A549 (cell line): ENCODE measurements at regions of chr9 and their contacts with region 1.

Region 1: DNA sequence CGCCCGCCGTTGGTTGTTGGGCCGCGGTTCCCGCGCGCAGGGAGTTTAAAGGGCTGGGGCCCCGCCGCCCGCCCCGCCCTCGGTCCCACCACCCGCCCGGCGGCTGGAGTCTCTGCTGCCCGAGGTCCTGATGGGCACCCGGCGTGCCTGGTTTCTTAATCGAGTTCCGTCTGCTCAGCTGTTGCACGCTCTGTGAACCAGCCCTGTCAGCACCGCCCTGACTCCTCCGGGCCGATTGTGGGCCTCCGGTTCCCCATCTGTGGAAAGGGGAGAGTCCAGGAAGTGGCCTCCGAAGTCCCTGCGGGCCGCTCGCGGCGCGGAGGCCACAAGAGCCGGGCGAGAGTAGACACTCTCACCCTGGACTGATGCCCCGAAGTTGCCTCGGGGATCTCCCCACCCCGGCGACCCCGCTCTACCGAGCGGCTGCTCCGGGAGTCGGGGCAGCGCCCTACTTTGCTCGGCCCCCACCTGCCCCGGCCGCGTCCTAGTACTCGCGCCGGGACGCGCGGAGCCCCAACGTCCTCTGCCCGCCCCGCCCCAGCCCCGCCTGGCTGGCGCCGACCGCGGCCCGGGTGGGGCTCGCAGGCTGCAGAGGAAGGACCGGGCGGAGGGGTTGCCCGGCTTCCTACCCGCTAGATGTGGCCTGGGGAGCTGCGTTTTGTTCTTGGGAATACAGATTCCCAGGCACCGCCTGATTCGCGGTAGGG is 793 bp upstream of the ZNF367 start:
- DNase-seq: peak; percentile 58 to 80
- ATAC-seq: peak; percentile 67 to 78
- H3K4me3 ChIP-seq: peak overlapping the region; percentile 90
- H3K27ac ChIP-seq: peak overlapping the region; percentile 95 to 99
- H3K4me1 ChIP-seq: peaks cover 26% of the 10 kb centered on the region
- CTCF ChIP-seq: no peak
- EP300 ChIP-seq: no peak
- POLR2A ChIP-seq: peak; percentile 30
- RAD21 ChIP-seq: peak in 1 of 2 experiments; percentile 31; a peak in 1 of 5 replicates

Region 2: DNA sequence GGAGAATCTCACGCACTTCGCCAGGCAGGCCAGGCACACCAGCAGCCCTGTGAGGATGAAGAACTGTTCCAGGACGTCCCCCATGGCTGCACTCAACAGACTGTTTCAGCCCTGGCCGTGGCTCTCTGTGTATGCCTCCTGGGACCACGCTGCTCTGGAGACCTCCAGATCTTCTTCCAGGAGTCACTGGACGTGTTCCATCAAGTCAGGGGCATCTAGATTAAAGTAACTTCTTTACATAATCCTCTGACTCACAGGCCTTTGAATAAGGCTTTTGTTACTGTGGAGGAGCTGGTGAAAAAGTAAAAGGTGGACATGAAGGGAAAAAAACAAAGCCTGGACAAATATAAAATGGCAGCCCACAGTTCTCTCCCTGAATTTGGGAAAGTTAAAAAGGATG is 116.9 kb before region 1 on chr9 and contains the start of gene HSD17B3:
- CTCF ChIA-PET with region 1: no interaction called
- POLR2A ChIA-PET with region 1: no interaction called
- DNase-seq: no peak
- ATAC-seq: no peak
- H3K4me3 ChIP-seq: no peak within 1 kb of the TSS
- H3K27ac ChIP-seq: no peak within 1 kb of the TSS
- H3K4me1 ChIP-seq: peaks cover 4% of the 10 kb centered on the region; the same call in 1 of the 3 replicates
- CTCF ChIP-seq: no peak
- EP300 ChIP-seq: no peak
- POLR2A ChIP-seq: no peak
- RAD21 ChIP-seq: no peak
- polyA plus RNA-seq, gene HSD17B3: 0.25 and 0.70 TPM in 2 replicates

Region 3: DNA sequence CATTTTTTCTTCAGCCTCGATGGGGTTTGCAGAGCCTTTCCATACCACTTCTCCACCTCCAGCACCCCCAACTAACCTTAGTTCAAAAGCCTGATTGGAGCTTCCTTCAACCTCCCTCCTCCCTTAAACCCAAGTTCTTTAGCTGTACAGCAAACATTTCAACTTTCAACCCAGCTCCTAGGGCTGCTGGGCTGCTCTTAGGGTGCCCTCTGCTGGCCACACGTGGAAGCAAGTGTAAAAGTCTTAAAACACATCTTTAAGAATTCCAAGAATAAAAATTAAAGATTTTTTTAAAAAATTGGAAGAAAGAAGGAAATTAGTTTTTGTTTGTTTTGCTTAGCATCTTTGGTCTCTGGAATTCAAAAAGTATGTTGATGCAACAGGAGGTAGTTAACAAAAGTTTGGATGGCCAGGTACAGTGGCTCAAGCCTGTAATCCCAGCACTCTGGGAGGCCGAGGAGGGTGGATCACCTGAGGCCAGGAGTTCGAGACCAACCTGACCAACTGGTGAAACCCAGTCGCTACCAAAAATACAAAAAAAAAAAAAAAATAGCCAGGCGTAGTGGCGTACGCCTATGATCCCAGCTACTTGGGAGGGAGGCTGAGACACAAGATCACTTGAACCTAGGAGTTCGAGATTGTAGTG is 101.5 kb before region 1 on chr9:
- CTCF ChIA-PET with region 1: no interaction called
- POLR2A ChIA-PET with region 1: no interaction called
- DNase-seq: peak; percentile 60 to 69
- ATAC-seq: peak; percentile 50 to 89; a peak in 4 of 6 replicates
- H3K4me3 ChIP-seq: no peak overlapping the region
- H3K27ac ChIP-seq: no peak overlapping the region
- H3K4me1 ChIP-seq: no peaks in the 10 kb centered on the region; the same call in 2 of the 3 replicates
- CTCF ChIP-seq: peak; percentile 87
- EP300 ChIP-seq: no peak
- POLR2A ChIP-seq: no peak
- RAD21 ChIP-seq: peak; percentile 83 to 84

Region 4: GRCh38 chr9:96344458-96345180 is 74.3 kb before region 1 on chr9:
- CTCF ChIA-PET with region 1: no interaction called
- POLR2A ChIA-PET with region 1: interaction called, 11 read pairs
- DNase-seq: peak; percentile 88 to 90
- ATAC-seq: peak; percentile 71
- H3K4me3 ChIP-seq: no peak overlapping the region
- H3K27ac ChIP-seq: peak overlapping the region; percentile 78 to 86
- H3K4me1 ChIP-seq: peaks cover 49% of the 10 kb centered on the region
- CTCF ChIP-seq: no peak
- EP300 ChIP-seq: no peak
- POLR2A ChIP-seq: no peak
- RAD21 ChIP-seq: no peak

Region 5: DNA sequence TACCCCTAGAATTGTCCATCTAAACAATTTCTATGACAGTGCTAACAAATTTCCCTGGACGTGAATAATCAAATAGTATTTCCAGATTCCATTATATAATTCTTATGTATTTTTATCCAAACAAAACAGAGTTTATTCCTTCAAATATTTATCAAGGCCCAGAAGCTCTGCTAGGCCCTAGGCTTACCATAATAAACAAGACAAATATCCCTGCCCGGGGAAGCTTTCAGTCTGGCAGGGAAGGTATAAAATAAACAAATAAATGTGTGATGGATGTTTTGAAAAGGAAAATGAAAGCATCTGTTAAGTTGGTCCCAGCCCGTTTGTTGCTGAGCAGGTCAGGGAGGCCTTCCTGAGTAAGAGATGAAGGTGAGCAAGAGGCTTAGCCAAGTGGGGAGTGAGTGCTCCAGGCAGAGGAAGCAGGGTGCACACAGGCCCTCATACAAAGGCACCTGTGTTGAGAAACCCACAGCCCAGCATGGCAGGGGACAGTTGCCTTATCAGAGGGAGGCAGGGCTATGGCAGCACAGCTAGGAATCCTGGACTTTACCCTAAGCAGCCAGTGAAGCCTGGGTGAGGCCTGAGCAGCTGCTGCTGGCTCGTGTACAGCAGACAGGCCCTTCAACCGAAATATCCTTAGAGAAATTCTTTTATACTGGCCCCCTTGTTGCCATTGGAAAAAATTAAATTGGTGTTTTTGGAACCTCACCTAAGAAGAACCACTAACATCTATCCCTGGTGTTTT is 27.8 kb before region 1 on chr9:
- CTCF ChIA-PET with region 1: no interaction called
- POLR2A ChIA-PET with region 1: no interaction called
- DNase-seq: peak in 1 of 2 experiments; percentile 44
- ATAC-seq: peak; percentile 76 to 82
- H3K4me3 ChIP-seq: no peak overlapping the region
- H3K27ac ChIP-seq: peak overlapping the region; percentile 60 to 62
- H3K4me1 ChIP-seq: peaks cover 22% of the 10 kb centered on the region; the same call in 2 of the 3 replicates
- CTCF ChIP-seq: no peak
- EP300 ChIP-seq: no peak
- POLR2A ChIP-seq: no peak
- RAD21 ChIP-seq: no peak